ENCODE measurements at regions of chr13 and their contacts with region 1.

Region 1: DNA sequence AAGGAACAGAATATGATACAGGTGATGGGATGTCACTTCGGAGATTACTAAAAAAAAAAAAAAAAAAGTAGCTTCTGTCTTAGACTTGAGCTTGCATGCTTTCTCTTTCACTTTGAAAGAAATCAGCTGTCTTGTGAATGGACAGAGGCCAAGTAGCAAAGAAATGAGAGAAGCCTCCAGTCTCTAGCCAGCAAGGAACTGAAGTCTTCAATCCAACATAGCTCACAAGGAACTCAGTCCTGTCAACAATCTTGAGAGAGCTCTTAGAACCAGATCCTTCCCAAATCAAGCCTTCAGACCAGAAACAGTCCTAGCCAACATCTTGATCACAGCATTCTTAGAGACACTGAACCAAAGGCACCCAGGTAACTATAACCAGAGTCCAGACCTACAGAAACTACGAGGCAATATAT is 7.7 kb downstream of the N4BP2L2 start:
- DNase-seq: no peak
- H3K4me3 ChIP-seq: peak overlapping the region in 13 of 59 donors; percentile 2 to 25 (median 18)
- H3K27ac ChIP-seq: peak overlapping the region in 11 of 59 donors; percentile 1 to 62 (median 17)
- H3K27me3 ChIP-seq: no peaks in the 10 kb centered on the region
- CTCF ChIP-seq: no peak

Region 2: DNA sequence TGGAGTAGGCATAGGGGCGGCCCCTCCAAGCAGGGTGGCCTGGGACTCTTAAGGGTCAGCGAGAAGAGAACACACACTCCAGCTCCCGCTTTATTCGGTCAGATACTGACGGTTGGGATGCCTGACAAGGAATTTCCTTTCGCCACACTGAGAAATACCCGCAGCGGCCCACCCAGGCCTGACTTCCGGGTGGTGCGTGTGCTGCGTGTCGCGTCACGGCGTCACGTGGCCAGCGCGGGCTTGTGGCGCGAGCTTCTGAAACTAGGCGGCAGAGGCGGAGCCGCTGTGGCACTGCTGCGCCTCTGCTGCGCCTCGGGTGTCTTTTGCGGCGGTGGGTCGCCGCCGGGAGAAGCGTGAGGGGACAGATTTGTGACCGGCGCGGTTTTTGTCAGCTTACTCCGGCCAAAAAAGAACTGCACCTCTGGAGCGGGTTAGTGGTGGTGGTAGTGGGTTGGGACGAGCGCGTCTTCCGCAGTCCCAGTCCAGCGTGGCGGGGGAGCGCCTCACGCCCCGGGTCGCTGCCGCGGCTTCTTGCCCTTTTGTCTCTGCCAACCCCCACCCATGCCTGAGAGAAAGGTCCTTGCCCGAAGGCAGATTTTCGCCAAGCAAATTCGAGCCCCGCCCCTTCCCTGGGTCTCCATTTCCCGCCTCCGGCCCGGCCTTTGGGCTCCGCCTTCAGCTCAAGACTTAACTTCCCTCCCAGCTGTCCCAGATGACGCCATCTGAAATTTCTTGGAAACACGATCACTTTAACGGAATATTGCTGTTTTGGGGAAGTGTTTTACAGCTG is 215.4 kb before region 1 on chr13 and contains the starts of genes BRCA2 and ZAR1L:
- intact Hi-C with region 1: no loop called
- DNase-seq: peak; percentile 86 to 92 (median 90)
- H3K4me3 ChIP-seq: peak within 1 kb of the TSS; percentile 56 to 90 (median 77)
- H3K27ac ChIP-seq: peak within 1 kb of the TSS in 58 of 59 donors; percentile 36 to 97 (median 89)
- H3K27me3 ChIP-seq: no peaks in the 10 kb centered on the region
- CTCF ChIP-seq: peak in 40 of 56 donors; percentile 10 to 58 (median 31)
- total RNA-seq, gene BRCA2: 0.11 to 3.3 (median 0.60) TPM
- total RNA-seq, gene ZAR1L: 0.35 TPM in 2 of 120 experiments, not detected in the others

Region 3: DNA sequence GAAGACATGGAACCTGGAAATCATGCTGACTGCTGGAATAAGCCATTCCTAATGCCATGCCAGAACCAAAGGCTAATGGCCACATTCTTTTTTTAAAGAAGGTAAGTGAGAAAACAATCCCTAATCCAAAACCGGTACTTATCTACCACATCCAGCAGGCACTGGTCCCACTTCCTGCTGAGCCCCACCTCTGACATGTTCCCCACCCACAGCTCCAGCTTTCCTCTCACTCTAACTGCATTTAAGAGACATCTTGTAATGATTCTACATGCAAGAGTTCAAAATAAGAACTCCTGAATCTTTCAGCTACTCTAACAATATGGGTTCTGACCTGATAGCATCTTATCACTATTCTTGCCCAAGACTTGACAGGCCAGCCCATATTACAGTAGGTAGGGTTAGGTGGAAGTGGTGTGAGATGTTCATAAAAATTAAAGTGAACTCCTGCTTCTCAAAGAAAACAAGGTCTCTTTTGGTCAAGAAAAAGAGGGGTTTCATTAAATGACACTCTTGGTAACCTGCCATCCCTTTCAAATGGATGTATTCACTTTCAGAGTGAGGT is 34.2 kb before region 1 on chr13:
- intact Hi-C with region 1: loop called in 1 of 2 experiments (anchors 5 kb)
- DNase-seq: no peak
- H3K4me3 ChIP-seq: no peak overlapping the region
- H3K27ac ChIP-seq: no peak overlapping the region
- H3K27me3 ChIP-seq: no peaks in the 10 kb centered on the region
- CTCF ChIP-seq: no peak

Region 4: GRCh38 chr13:32737111-32737571 is 206.3 kb after region 1 on chr13:
- intact Hi-C with region 1: no loop called
- DNase-seq: no peak
- H3K4me3 ChIP-seq: peak overlapping the region in 52 of 59 donors; percentile 0 to 53 (median 30)
- H3K27ac ChIP-seq: peak overlapping the region in 44 of 59 donors; percentile 0 to 78 (median 50)
- H3K27me3 ChIP-seq: no peaks in the 10 kb centered on the region
- CTCF ChIP-seq: no peak

Measured in dorsolateral prefrontal cortex (tissue), 120 donors.